ENCODE measurements at regions of chr3 and their contacts with region 1.

Region 1: DNA sequence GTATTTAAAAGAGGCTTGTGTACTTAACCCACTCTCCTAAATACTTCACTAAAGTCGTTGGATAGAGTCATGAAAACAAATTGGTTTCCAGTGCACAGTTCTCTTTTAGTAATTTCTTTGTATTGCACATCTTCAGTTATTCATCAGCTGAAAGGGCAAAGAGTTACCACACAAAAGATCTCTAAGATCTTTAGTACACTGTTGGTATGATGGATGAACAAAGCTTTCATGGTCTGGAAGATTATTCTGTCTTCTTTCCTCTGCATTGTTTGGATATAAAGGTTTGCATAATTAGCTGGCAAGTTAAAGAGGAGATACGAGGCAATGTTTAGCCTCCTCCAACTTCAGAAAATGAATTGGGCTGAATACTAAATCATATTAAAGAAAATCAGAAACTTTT is 40.5 kb downstream of the BCHE start:
- DNase-seq: no peak
- ATAC-seq: no peak
- H3K4me3 ChIP-seq: no peak overlapping the region
- H3K4me3 Mint-ChIP-seq: no peak overlapping the region
- H3K27ac ChIP-seq: no peak overlapping the region
- H3K27ac Mint-ChIP-seq: no peak overlapping the region
- H3K4me1 ChIP-seq: no peaks in the 10 kb centered on the region
- H3K4me1 Mint-ChIP-seq: no peaks in the 10 kb centered on the region
- H3K27me3 ChIP-seq: no peaks in the 10 kb centered on the region
- H3K27me3 Mint-ChIP-seq: no peaks in the 10 kb centered on the region
- CTCF ChIP-seq: no peak

Region 2: DNA sequence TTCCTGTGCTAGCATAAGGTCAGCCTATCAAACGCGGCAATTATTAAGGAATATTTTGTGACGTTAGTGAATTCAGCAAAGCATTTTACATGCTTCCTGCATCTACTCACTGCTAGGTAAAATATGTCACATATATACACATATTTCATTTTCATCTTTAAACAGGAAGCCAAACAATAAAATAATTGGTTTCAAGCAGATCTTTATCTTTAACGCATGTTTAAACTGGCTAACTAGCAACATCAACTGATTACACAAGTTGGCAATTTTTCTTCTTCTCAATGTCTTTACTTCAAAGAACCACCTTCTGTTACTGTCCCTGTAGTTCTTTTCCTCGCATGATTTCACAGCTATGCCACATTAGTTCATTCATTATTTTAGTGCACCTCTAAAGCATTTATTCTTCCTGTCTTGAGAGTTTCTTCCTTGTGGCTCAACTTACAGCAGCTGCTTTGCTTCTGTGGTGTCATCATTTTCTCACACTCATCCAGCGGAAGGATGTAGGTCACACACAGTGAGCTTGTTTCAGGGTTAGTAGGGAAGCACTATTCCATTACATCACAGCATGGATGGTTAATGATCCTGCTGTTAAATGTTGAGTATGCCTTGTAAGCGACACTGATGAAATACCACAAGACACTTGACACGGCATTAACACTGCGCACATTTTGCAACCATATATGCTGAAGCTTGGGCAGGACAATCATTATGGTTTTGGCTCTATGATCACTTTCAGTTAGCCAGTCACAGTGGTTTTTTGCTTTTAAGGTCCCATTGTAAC is 42.8 kb after region 1 on chr3:
- CTCF ChIA-PET with region 1: no interaction called
- POLR2A ChIA-PET with region 1: interaction called, 3 read pairs
- intact Hi-C with region 1: loop called in 1 of 2 experiments (anchors 1 kb)
- DNase-seq: no peak
- ATAC-seq: no peak
- H3K4me3 ChIP-seq: no peak overlapping the region
- H3K4me3 Mint-ChIP-seq: no peak overlapping the region
- H3K27ac ChIP-seq: no peak overlapping the region
- H3K27ac Mint-ChIP-seq: no peak overlapping the region
- H3K4me1 ChIP-seq: no peaks in the 10 kb centered on the region
- H3K4me1 Mint-ChIP-seq: no peaks in the 10 kb centered on the region
- H3K27me3 ChIP-seq: no peaks in the 10 kb centered on the region
- H3K27me3 Mint-ChIP-seq: no peaks in the 10 kb centered on the region
- CTCF ChIP-seq: no peak